ENCODE measurements at regions of chr11 and their contacts with region 1.

Region 1: GRCh38 chr11:128630367-128631230 is 43.2 kb upstream of the ETS1 start:
- DNase-seq: peak; percentile 90
- ATAC-seq: peak; percentile 95

Region 2: GRCh38 chr11:128172046-128172878 is 458.3 kb before region 1 on chr11:
- intact Hi-C with region 1: loop called (anchors 5 kb)
- DNase-seq: peak; percentile 81
- ATAC-seq: peak; percentile 77

Region 3: DNA sequence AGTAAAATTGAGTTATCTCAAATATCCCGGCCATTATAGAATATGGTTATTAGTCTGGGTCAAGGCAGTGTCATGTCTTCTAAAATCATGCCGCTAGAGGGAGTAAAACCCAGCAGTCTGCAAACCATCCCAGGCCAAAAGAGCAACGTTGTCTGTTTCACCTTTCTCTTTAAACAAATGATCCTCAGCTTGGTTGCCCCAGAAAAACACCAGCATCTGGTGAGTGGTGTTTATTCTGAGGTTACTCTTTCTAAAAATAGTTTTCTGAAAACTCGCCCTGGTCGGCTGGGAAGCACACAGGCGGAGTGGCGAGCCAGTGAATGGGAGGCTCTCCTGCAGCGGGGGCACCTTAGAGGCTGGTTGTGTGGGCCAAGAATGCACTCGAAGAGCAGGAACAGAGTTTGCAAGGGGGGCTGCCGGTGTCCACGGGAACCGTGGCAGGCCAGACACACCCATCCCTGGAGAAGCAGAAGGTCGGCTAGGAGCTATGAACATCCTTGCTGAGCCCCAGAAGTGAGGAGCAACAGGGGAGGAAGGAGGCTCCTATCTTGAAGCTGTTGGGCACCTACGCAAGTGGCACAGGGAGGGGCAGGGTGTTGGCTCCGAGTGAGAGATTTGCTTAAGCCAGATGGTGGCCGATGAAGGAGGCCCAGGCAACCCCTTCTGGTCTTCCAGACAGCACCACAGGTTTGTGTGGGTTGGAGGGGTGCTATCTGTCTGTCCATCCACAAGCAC is 340.3 kb before region 1 on chr11:
- intact Hi-C with region 1: loop called (anchors 2 kb)
- DNase-seq: peak; percentile 38
- ATAC-seq: peak; percentile 91

Region 4: DNA sequence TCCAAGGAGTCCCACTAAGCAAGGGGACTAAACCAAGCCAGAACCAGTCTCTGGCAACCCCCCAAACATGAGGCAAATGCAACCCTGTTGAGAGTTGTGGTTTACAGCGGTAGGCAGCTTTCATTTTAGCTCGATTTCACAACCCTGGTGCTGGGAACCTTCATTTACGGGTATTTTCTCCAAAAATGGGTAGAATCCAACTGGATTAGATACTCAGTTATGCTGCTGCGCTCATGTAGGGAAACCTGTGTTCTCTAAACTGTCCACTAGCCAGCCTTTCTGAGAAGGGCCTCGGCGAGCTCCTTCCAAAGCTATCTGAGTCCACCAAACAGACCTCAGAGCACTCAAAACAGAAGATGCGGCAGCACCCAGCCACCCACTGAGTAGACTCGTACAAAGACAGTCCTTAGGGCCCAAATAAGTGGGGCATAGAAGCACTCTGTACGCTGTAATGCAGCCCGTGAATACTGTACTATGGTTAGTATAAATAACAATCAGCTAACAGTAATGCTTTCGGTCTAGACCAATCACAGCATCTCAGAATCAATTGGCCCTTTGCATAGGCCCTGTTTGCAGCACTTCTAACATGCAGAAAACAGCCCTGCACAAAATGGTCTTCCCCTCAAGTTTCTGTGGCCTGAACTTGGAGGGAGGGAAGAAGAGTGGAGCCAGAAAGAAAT is 147.9 kb before region 1 on chr11:
- intact Hi-C with region 1: no loop called
- DNase-seq: no peak
- ATAC-seq: peak; percentile 42

Region 5: GRCh38 chr11:128831174-128832120 is 200.8 kb after region 1 on chr11:
- intact Hi-C with region 1: loop called (anchors 2 kb)
- DNase-seq: peak; percentile 87
- ATAC-seq: peak; percentile 84

Measured in left ventricle myocardium superior (tissue), 1 donor.